ENCODE measurements at regions of chr5 and their contacts with region 1.

Region 1: DNA sequence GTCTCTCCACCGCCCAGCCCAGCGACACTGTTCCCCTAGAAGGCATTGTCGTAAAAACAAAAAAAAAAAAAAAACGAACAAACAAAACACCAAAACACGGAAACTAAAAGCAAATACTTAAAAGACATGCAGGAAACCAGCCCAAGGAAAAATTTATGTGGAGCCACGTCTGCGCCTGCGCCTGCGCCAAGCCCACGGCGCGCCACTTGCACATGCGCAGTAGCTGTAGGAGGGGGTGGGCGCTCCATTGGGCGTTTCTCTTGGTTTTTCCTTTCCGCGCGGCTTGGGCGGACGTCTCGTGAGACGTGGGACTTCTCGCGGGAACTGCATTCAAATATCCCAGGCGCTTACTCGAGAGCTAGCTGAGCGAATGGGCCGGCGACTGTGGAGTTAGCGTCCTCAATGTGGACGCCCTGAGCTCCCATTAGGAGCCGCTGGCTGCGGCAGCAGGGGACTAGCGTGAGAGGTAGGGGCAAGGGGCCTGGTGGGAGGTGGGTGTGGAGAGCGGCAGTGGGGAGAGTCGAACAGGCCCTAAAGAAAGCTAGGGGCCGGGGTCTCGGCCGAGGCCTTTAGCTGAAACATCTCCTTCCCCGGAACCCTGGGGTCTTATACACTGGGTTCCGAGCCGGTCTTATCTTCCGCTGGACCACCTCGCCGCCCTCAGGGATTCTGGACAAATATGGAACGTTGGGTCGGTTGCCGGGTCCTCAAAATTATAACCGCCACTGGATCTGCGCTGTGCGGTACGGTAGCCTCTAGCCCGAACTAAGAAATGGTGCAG is at the start of gene SPDL1:
- DNase-seq: peak; percentile 96
- ATAC-seq: peak; percentile 97
- total RNA-seq, gene SPDL1: 4.6 TPM

Region 2: GRCh38 chr5:168679515-168679920 is 904.1 kb before region 1 on chr5:
- intact Hi-C with region 1: loop called (anchors 5 kb)
- DNase-seq: peak; percentile 73
- ATAC-seq: peak; percentile 41

Region 3: GRCh38 chr5:168987543-168988300 is 595.9 kb before region 1 on chr5:
- intact Hi-C with region 1: loop called (anchors 10 kb)
- DNase-seq: peak; percentile 81
- ATAC-seq: peak; percentile 56

Region 4: GRCh38 chr5:169442403-169442874 is 141.2 kb before region 1 on chr5:
- intact Hi-C with region 1: no loop called
- DNase-seq: no peak
- ATAC-seq: peak; percentile 66

Region 5: GRCh38 chr5:169474226-169474625 is 109.4 kb before region 1 on chr5:
- intact Hi-C with region 1: no loop called
- DNase-seq: no peak
- ATAC-seq: no peak

Region 6: GRCh38 chr5:169716278-169716677 is 132.7 kb after region 1 on chr5:
- intact Hi-C with region 1: no loop called
- DNase-seq: no peak
- ATAC-seq: no peak

Measured in Right ventricle myocardium inferior (tissue), 1 donor.